Aorta (tissue), 5 donors: ENCODE measurements at regions of chr3 and their contacts with region 1.

Region 1: DNA sequence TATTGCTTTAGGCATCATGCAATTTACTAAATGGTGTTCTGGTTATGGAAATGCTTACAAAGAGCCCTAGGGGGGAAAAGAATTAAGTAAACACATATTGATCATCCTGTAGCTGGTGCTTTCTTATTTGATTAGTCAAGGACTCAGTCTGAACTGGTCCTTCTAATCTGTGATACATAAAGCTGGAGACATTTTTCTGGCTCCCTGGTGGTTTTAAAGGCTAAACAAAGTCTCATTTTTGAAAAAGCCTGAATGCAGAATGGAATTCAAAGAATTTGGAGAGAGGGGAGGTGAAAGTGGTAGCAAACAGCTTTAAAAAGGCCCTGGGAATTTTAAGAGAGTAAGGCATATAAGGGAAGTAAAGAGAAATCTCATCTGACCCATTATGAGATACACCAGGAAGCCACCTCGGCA is 149.7 kb downstream of the RBMS3 start:
- DNase-seq: no peak
- ATAC-seq: no peak
- H3K4me3 ChIP-seq: no peak overlapping the region
- H3K27ac ChIP-seq: peak overlapping the region; percentile 3 to 74
- H3K4me1 ChIP-seq: peaks cover 7 to 8% of the 10 kb centered on the region in 2 donors
- H3K27me3 ChIP-seq: no peaks in the 10 kb centered on the region

Region 2: DNA sequence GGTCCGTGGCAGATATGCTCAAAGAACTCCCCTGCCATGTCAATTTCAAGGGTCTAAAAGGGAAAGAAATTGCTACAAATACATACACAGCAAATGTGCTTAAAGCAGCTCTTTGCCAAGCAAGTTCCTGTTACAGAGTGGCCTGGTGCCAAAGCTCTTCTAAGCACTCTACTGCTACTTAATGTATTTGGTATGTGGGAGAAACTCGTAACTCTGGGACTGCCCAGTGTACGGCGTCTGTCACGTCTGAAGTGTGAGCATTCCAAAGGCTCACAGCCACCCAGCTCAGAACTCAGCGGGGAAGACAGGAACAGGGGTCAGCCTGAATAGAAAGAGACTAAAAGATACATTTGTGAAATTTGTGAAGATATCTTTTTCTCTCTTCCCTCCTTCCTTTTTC is 95.1 kb before region 1 on chr3:
- intact Hi-C with region 1: loop called in 1 of 2 experiments (anchors 10 kb)
- DNase-seq: peak; percentile 81 to 91
- ATAC-seq: peak; percentile 82
- H3K4me3 ChIP-seq: peak overlapping the region; percentile 39 to 90
- H3K27ac ChIP-seq: peak overlapping the region; percentile 40 to 90
- H3K4me1 ChIP-seq: peaks cover 4 to 7% of the 10 kb centered on the region in 2 donors
- H3K27me3 ChIP-seq: no peaks in the 10 kb centered on the region

Region 3: DNA sequence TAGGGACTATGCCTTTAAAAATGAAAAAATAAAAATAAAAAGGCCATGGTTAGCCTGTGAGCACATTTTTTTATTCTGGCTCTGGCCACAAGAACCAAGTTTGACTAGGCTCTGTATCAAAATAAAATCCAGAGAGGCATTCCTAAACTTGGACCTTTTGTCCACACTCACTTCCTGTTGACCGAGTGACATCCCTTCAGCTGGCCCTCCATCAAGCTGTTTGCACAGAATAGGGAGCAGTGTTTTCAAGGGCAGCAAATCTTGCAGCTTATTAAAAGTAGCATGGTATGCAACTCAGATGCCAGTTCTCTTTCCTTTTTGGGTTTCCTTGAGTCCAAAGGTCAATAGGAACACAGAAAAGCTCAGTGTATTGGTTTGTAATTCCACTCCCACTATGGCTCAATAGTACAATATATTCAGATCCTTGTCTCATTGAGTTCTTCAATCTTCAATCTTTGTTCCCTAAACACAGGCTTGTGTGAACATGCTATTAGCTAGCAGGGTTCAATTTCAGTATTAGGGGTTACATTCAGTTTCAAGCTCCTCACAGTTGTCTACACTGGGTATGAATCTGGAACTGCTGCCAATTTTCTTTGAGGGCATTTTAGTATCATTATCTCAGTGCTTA is 94.8 kb after region 1 on chr3:
- intact Hi-C with region 1: loop called in 1 of 2 experiments (anchors 10 kb)
- DNase-seq: peak in 1 of 2 donors; percentile 74
- ATAC-seq: peak; percentile 93
- H3K4me3 ChIP-seq: no peak overlapping the region
- H3K27ac ChIP-seq: peak overlapping the region; percentile 43 to 44
- H3K4me1 ChIP-seq: peaks cover 2 to 6% of the 10 kb centered on the region in 2 donors
- H3K27me3 ChIP-seq: no peaks in the 10 kb centered on the region

Region 4: GRCh38 chr3:29582273-29582672 is 151.7 kb after region 1 on chr3:
- intact Hi-C with region 1: no loop called
- DNase-seq: no peak
- ATAC-seq: no peak
- H3K4me3 ChIP-seq: no peak overlapping the region
- H3K27ac ChIP-seq: no peak overlapping the region
- H3K4me1 ChIP-seq: peaks cover under 1 to 6% of the 10 kb centered on the region in 2 donors
- H3K27me3 ChIP-seq: no peaks in the 10 kb centered on the region